A549 (cell line): ENCODE measurements at regions of chr15 and their contacts with region 1.

Region 1: DNA sequence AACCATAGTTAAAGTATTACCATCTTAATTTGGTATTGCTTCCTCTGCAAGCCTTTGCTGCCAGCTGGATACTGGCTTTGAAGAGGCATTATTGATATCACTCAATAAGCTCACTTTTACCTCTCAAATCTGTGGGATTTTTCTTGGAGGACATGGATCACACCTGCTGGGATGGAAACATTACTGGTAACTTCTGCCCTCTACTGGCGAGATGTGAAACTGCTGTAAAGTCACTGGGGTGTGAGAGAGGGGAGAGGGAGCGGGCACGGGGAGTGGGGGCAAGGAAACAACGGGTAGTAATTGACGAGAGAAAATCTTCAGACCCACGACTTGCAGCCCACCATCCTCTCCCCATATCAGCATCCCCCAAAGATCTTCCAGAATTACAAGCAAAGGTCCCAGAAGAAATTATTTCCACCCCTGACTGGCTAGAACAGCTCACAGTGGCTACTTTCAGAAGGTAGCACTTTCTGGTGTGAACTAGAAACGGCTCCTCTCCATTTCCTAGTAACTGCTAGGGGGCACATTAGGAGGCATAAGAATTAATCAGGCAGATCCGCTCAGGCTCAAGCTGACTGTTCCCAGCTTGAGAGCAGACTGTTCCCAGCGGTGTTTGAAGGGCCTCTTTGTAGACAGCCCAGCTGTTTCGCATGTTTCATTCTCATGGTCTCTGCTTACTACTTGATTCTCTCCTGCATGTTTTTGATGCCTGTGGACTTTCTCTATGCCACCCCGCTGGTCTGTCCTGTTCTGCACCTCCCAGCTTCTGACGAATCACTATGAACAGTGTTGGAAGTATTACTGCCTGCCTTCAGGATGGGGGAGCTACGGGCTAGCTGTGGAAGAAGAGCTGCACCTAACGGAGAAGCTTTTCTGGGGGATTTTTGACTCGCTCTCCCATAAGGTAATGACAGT is 230.4 kb upstream of the CHRM5 start:
- DNase-seq: peak; percentile 29 to 80
- ATAC-seq: peak; percentile 84 to 94
- H3K4me3 ChIP-seq: no peak overlapping the region
- H3K27ac ChIP-seq: no peak overlapping the region
- H3K4me1 ChIP-seq: no peaks in the 10 kb centered on the region
- CTCF ChIP-seq: peak; percentile 75
- EP300 ChIP-seq: no peak
- POLR2A ChIP-seq: no peak
- RAD21 ChIP-seq: peak; percentile 53 to 58

Region 2: GRCh38 chr15:33292717-33293307 is 445.1 kb before region 1 on chr15:
- CTCF ChIA-PET with region 1: interaction called, 16 read pairs
- POLR2A ChIA-PET with region 1: no interaction called
- DNase-seq: peak; percentile 59 to 74
- ATAC-seq: peak; percentile 84 to 95
- H3K4me3 ChIP-seq: no peak overlapping the region
- H3K27ac ChIP-seq: no peak overlapping the region
- H3K4me1 ChIP-seq: no peaks in the 10 kb centered on the region
- CTCF ChIP-seq: peak; percentile 92
- EP300 ChIP-seq: no peak
- POLR2A ChIP-seq: no peak
- RAD21 ChIP-seq: peak; percentile 88 to 89

Region 3: GRCh38 chr15:33722005-33722672 is 15.8 kb before region 1 on chr15:
- CTCF ChIA-PET with region 1: interaction called, 177 read pairs
- POLR2A ChIA-PET with region 1: no interaction called
- DNase-seq: peak in 1 of 2 experiments; percentile 35
- ATAC-seq: peak in 1 of 2 experiments; percentile 36; a peak in 1 of 6 replicates
- H3K4me3 ChIP-seq: no peak overlapping the region
- H3K27ac ChIP-seq: no peak overlapping the region
- H3K4me1 ChIP-seq: peaks cover 6% of the 10 kb centered on the region; the same call in 1 of the 3 replicates
- CTCF ChIP-seq: no peak
- EP300 ChIP-seq: no peak
- POLR2A ChIP-seq: no peak
- RAD21 ChIP-seq: no peak

Region 4: GRCh38 chr15:33963831-33964664 is 226.1 kb after region 1 on chr15:
- CTCF ChIA-PET with region 1: interaction called, 51 read pairs
- POLR2A ChIA-PET with region 1: no interaction called
- DNase-seq: peak; percentile 24 to 49
- ATAC-seq: peak; percentile 88 to 94
- H3K4me3 ChIP-seq: no peak overlapping the region
- H3K27ac ChIP-seq: no peak overlapping the region
- H3K4me1 ChIP-seq: no peaks in the 10 kb centered on the region
- CTCF ChIP-seq: peak; percentile 85
- EP300 ChIP-seq: no peak
- POLR2A ChIP-seq: no peak
- RAD21 ChIP-seq: peak; percentile 71 to 79

Region 5: GRCh38 chr15:33994005-33994615 is 256.2 kb after region 1 on chr15:
- CTCF ChIA-PET with region 1: interaction called, 40 read pairs
- POLR2A ChIA-PET with region 1: no interaction called
- DNase-seq: peak in 1 of 2 experiments; percentile 68
- ATAC-seq: peak; percentile 71 to 93; a peak in 5 of 6 replicates
- H3K4me3 ChIP-seq: no peak overlapping the region
- H3K27ac ChIP-seq: no peak overlapping the region
- H3K4me1 ChIP-seq: no peaks in the 10 kb centered on the region
- CTCF ChIP-seq: peak; percentile 55
- EP300 ChIP-seq: no peak
- POLR2A ChIP-seq: no peak
- RAD21 ChIP-seq: peak; percentile 55 to 72; a peak in 4 of 5 replicates